AG04449 (cell line): ENCODE measurements at regions of chr19 and their contacts with region 1.

Region 1: DNA sequence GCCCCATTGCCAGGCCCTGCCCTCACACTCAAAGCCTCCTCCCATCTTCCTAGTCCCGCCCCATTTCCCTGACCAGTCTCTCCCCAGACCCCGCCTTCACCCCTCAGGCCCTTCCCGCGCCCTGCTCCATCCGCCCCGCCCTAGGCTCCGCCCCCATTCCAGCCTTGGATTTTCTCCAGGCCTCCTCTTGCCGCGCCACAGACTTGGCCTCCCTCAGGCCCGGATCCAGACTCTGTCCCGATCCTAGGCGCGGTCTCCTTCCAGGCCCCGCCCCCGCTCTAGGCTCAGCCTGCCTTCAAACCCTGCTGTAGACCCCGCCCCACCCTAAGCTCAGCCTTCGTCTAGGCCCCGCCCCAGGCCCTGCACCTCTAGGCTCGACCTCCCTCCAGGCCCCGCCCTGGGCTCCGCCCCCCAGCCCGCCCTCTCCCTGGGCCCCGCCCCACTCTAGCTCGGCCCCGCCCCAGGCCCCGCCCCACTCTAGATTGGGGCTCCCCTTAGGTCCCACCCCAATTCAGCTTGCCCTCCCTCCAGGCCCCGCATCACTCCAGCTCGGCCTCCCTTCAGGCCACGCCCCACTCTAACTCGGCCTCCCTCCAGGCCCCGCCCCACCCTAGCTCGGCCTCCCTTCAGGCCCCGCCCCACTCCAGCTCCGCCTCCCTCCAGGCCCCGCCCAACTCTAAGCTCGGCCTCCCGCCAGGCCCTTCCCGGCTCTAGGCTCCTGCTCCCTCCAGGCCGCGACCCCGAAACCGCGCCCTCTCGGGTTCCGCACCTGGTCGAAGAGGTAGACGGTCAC is 18.5 kb downstream of the LMTK3 start:
- DNase-seq: peak; percentile 78
- H3K4me3 ChIP-seq: peak overlapping the region; percentile 76
- CTCF ChIP-seq: no peak

Region 2: DNA sequence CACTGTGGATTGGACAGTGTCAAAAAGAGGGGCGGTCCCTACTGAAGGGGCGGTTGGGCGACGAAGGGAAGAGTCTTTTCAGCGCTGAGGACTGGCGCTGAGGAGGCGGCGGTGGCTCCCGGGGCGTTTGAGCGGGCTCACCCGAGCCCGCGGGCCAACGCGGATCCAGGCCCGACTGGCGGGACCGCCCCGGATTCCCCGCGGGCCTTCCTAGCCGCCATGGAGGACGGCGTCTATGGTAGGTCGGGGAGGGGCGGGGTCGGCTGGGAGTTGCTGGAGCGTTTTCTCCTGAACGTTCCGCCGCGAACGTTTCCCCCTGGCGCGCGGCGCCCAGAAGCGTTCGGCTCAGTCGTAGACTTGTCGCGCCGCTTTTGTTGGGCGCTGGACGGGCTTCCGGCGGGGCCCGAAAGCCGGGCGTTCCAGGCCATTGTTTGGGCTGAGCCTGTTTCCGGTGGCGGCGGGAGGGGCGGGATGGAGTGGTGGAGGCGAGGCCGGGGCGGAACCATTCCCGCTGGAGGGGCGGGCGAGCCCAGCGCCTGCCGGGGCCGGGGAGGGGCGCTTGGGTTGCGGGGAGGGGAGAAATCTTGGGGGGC is 23.7 kb before region 1 on chr19 and contains the start of gene CYTH2:
- CTCF ChIA-PET with region 1: interaction called, 29 read pairs
- POLR2A ChIA-PET with region 1: interaction called, 3 read pairs
- DNase-seq: no peak
- H3K4me3 ChIP-seq: peak within 1 kb of the TSS; percentile 84
- CTCF ChIP-seq: no peak

Region 3: GRCh38 chr19:48510421-48511280 is 17.5 kb after region 1 on chr19:
- CTCF ChIA-PET with region 1: interaction called, 39 read pairs
- POLR2A ChIA-PET with region 1: interaction called, 5 read pairs
- DNase-seq: no peak
- H3K4me3 ChIP-seq: peak overlapping the region; percentile 50
- CTCF ChIP-seq: no peak

Region 4: GRCh38 chr19:48595833-48596232 is 102.7 kb after region 1 on chr19:
- CTCF ChIA-PET with region 1: interaction called, 392 read pairs
- POLR2A ChIA-PET with region 1: no interaction called
- DNase-seq: no peak
- H3K4me3 ChIP-seq: no peak overlapping the region
- CTCF ChIP-seq: no peak

Region 5: GRCh38 chr19:48618916-48619691 is 126.0 kb after region 1 on chr19 and contains the starts of genes RPL18 and SPHK2:
- CTCF ChIA-PET with region 1: interaction called, 22 read pairs
- POLR2A ChIA-PET with region 1: interaction called, 3 read pairs
- DNase-seq: peak; percentile 99
- H3K4me3 ChIP-seq: peak within 1 kb of the TSS; percentile 97
- CTCF ChIP-seq: no peak

Region 6: GRCh38 chr19:48637170-48637947 is 144.2 kb after region 1 on chr19 and contains the start of gene DBP:
- CTCF ChIA-PET with region 1: no interaction called
- POLR2A ChIA-PET with region 1: no interaction called
- DNase-seq: peak; percentile 92
- H3K4me3 ChIP-seq: peak within 1 kb of the TSS; percentile 66
- CTCF ChIP-seq: no peak